CD8-positive, alpha-beta T cell (primary cell): ENCODE measurements at regions of chr2 and their contacts with region 1.

Region 1: GRCh38 chr2:198309673-198310280 is 505.4 kb downstream of the PLCL1 start:
- DNase-seq: peak; percentile 16 to 69 (median 50)
- ATAC-seq: peak; percentile 49
- H3K4me3 ChIP-seq: no peak overlapping the region
- H3K4me3 Mint-ChIP-seq: no peak overlapping the region
- H3K27ac ChIP-seq: no peak overlapping the region
- H3K27ac Mint-ChIP-seq: no peak overlapping the region
- H3K4me1 ChIP-seq: no peaks in the 10 kb centered on the region
- H3K4me1 Mint-ChIP-seq: no peaks in the 10 kb centered on the region
- H3K27me3 ChIP-seq: no peaks in the 10 kb centered on the region
- H3K27me3 Mint-ChIP-seq: peaks cover 37% of the 10 kb centered on the region
- CTCF ChIP-seq: peak; percentile 97

Region 2: GRCh38 chr2:198296665-198297308 is 13.0 kb before region 1 on chr2:
- CTCF ChIA-PET with region 1: interaction called, 22 read pairs
- POLR2A ChIA-PET with region 1: interaction called, 5 read pairs
- intact Hi-C with region 1: no loop called
- DNase-seq: peak; percentile 10 to 72 (median 60)
- ATAC-seq: peak; percentile 79
- H3K4me3 ChIP-seq: no peak overlapping the region
- H3K4me3 Mint-ChIP-seq: no peak overlapping the region
- H3K27ac ChIP-seq: no peak overlapping the region
- H3K27ac Mint-ChIP-seq: no peak overlapping the region
- H3K4me1 ChIP-seq: no peaks in the 10 kb centered on the region
- H3K4me1 Mint-ChIP-seq: peaks cover 2% of the 10 kb centered on the region
- H3K27me3 ChIP-seq: no peaks in the 10 kb centered on the region
- H3K27me3 Mint-ChIP-seq: peaks cover 29% of the 10 kb centered on the region
- CTCF ChIP-seq: peak; percentile 84

Region 3: GRCh38 chr2:198630384-198630783 is 320.6 kb after region 1 on chr2:
- CTCF ChIA-PET with region 1: no interaction called
- POLR2A ChIA-PET with region 1: no interaction called
- intact Hi-C with region 1: no loop called
- DNase-seq: no peak
- ATAC-seq: no peak
- H3K4me3 ChIP-seq: no peak overlapping the region
- H3K4me3 Mint-ChIP-seq: no peak overlapping the region
- H3K27ac ChIP-seq: no peak overlapping the region
- H3K27ac Mint-ChIP-seq: no peak overlapping the region
- H3K4me1 ChIP-seq: no peaks in the 10 kb centered on the region
- H3K4me1 Mint-ChIP-seq: no peaks in the 10 kb centered on the region
- H3K27me3 ChIP-seq: no peaks in the 10 kb centered on the region
- H3K27me3 Mint-ChIP-seq: no peaks in the 10 kb centered on the region
- CTCF ChIP-seq: no peak

Region 4: GRCh38 chr2:198657512-198658121 is 347.8 kb after region 1 on chr2:
- CTCF ChIA-PET with region 1: no interaction called
- POLR2A ChIA-PET with region 1: no interaction called
- intact Hi-C with region 1: loop called in 1 of 2 experiments (anchors 10 kb)
- DNase-seq: no peak
- ATAC-seq: no peak
- H3K4me3 ChIP-seq: no peak overlapping the region
- H3K4me3 Mint-ChIP-seq: no peak overlapping the region
- H3K27ac ChIP-seq: no peak overlapping the region
- H3K27ac Mint-ChIP-seq: no peak overlapping the region
- H3K4me1 ChIP-seq: no peaks in the 10 kb centered on the region
- H3K4me1 Mint-ChIP-seq: no peaks in the 10 kb centered on the region
- H3K27me3 ChIP-seq: no peaks in the 10 kb centered on the region
- H3K27me3 Mint-ChIP-seq: no peaks in the 10 kb centered on the region
- CTCF ChIP-seq: no peak

Region 5: DNA sequence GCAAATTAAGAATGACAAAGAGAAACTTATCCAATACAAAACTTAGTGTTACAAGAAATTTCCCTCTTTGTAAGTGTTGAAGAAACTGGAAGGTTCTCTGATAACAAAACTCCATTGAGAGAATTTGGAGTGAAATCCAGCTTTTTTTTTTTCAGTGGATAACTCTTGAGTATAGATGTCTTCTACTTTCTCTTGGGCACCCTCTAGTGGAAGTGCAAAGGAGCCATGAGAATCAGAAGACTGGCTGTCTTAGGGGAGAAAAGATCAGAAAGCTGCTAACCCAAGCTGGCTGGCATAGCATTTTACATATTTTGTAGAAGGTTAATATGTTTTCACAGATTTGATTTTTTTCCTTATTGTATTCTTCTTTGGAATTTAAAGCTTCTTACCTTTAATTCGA is 1286.8 kb after region 1 on chr2:
- CTCF ChIA-PET with region 1: no interaction called
- POLR2A ChIA-PET with region 1: no interaction called
- intact Hi-C with region 1: loop called in 1 of 2 experiments (anchors 5 kb)
- DNase-seq: no peak
- ATAC-seq: no peak
- H3K4me3 ChIP-seq: no peak overlapping the region
- H3K4me3 Mint-ChIP-seq: no peak overlapping the region
- H3K27ac ChIP-seq: no peak overlapping the region
- H3K27ac Mint-ChIP-seq: no peak overlapping the region
- H3K4me1 ChIP-seq: no peaks in the 10 kb centered on the region
- H3K4me1 Mint-ChIP-seq: no peaks in the 10 kb centered on the region
- H3K27me3 ChIP-seq: no peaks in the 10 kb centered on the region
- H3K27me3 Mint-ChIP-seq: no peaks in the 10 kb centered on the region
- CTCF ChIP-seq: no peak

Region 6: GRCh38 chr2:199861132-199861774 is 1551.5 kb after region 1 on chr2:
- CTCF ChIA-PET with region 1: no interaction called
- POLR2A ChIA-PET with region 1: no interaction called
- intact Hi-C with region 1: loop called (anchors 5 to 10 kb)
- DNase-seq: peak in 2 of 9 experiments; percentile 7 to 25
- ATAC-seq: no peak
- H3K4me3 ChIP-seq: no peak overlapping the region
- H3K4me3 Mint-ChIP-seq: no peak overlapping the region
- H3K27ac ChIP-seq: no peak overlapping the region
- H3K27ac Mint-ChIP-seq: no peak overlapping the region
- H3K4me1 ChIP-seq: no peaks in the 10 kb centered on the region
- H3K4me1 Mint-ChIP-seq: no peaks in the 10 kb centered on the region
- H3K27me3 ChIP-seq: no peaks in the 10 kb centered on the region
- H3K27me3 Mint-ChIP-seq: peaks cover 19% of the 10 kb centered on the region
- CTCF ChIP-seq: peak; percentile 55